Right cardiac atrium (tissue), 5 donors: ENCODE measurements at regions of chr1 and their contacts with region 1.

Region 1: DNA sequence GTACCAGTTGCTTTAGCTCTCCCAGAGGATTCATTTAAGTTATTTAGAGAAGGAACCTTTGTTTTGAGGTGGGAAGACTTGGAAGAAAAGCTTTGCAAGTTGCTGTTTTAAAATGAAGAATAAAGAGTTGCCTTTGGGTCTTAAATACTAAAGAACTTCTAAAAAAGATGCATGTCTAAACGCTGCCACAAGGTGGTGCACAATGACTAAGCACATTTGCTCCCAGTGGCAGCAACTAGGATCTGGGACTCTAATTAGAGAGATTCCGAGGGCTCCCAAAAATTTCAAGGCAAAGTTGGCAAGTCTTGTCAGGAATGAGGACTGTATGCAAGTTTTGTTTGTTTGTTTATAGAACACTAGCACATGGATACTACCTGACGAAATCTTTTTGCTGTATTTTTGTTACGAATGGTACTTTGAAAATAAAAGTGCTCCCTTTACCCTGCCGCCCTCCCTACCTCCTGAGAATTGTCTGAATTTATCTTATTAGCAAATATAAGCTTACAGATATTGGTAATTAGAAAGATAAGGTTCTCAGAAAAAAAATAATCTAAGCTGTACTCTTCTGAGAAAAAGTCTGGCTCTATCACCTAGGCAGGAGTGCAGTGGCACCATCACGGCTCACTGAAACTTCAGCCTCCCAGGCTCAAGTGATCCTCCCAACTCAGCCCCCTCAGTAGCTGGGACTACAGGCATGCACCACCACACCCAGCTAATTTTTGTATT is 121.8 kb downstream of the HFM1 start:
- DNase-seq: peak in 2 of 3 donors; percentile 33 to 64
- ATAC-seq: peak; percentile 66 to 75
- H3K4me3 ChIP-seq: peak overlapping the region; percentile 38
- H3K27ac ChIP-seq: no peak overlapping the region
- H3K4me1 ChIP-seq: no peaks in the 10 kb centered on the region
- H3K27me3 ChIP-seq: no peaks in the 10 kb centered on the region

Region 2: GRCh38 chr1:91397605-91398004 is 114.7 kb after region 1 on chr1:
- intact Hi-C with region 1: loop called in 3 of 4 experiments (anchors 5 to 10 kb)
- DNase-seq: no peak
- ATAC-seq: no peak
- H3K4me3 ChIP-seq: no peak overlapping the region
- H3K27ac ChIP-seq: no peak overlapping the region
- H3K4me1 ChIP-seq: no peaks in the 10 kb centered on the region
- H3K27me3 ChIP-seq: no peaks in the 10 kb centered on the region

Region 3: DNA sequence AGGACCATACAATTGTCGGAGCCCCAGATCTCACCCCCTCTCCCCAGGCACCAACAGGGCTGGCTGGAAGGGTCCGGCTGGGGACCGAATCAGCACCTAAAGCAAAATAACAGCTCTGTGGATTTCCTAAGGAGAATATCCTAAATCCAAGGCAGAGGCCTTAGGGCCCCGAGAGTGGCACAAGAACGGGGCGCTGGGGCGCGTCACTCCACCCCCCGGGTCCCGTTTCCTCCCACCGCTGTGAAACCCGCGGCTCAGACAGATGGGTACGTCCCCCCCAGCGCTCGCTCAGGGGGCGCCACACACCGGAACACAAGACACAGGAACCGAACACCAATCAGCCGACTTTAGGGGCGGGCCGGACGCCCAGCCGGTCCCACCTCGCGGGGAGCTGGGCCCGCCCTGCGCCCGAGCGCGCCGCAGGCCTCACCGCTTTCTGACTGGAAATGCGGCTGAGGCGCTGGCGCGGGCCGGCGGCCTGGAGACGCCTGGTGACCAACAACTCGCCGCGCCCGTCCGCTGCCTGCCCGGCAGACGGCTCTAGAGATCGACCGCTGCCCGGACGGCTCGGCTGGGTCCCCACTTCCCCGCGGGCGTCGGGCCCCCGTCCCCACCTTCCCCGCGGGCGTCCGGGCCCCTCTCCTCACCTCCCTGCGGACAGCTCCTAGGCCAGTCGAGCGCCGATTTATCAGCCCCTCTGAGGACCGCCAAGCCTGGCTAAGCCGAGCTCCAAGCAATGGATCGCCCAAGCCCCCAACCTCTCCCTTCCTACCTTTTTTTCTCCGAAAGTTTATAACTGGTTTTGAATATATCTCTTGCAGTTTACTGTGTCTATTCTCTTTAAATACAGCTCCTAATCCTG is 121.5 kb after region 1 on chr1 and contains the start of gene HFM1:
- intact Hi-C with region 1: loop called in 3 of 4 experiments (anchors 5 to 10 kb)
- DNase-seq: peak; percentile 89 to 95 (median 93)
- ATAC-seq: peak; percentile 99 to 100
- H3K4me3 ChIP-seq: peak within 1 kb of the TSS; percentile 89
- H3K27ac ChIP-seq: peak within 1 kb of the TSS; percentile 89
- H3K4me1 ChIP-seq: no peaks in the 10 kb centered on the region
- H3K27me3 ChIP-seq: no peaks in the 10 kb centered on the region
- total RNA-seq, gene HFM1: 2.2 to 2.9 (median 2.4) TPM

Region 4: DNA sequence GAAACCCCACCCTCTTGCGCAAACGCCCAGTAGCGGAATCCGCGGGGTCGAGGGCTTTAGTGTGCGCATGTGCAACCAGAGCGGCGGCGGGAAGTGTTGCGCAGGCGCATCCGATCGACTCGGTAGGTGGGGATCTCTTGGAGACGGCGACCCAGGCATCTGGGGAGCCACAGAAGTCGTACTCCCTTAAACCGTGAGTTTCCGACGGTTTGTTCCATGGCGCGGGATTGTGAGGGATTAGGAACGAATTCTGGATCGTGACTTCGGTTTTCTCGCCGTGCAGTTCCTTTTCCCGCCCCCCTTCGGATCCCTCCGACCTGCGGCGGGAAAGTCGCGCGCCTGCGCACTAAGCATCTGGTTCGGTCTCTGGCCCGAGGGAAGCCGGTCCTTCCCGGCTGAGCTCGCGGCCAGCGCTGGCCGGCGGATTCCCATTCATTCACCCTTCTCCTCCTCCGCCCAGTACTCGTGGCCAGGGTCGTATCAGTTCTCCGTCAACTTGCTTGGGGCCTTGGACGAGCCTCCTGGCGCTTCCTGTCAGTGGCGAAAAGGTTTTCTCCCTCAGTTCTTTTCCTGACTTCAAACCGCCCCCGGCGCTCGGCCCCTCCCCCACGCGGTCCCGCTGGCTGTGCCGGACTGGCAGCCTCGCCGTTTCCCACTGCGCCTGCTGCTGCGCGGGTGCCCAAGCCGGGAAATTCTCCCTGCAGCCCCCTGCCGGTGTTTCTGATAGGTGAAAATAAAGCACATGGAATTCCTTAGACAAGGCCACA is 218.1 kb after region 1 on chr1 and contains the start of gene CDC7:
- intact Hi-C with region 1: loop called in 3 of 4 experiments (anchors 10 kb)
- DNase-seq: peak; percentile 96 to 98 (median 97)
- ATAC-seq: peak; percentile 97
- H3K4me3 ChIP-seq: peak within 1 kb of the TSS; percentile 55
- H3K27ac ChIP-seq: peak within 1 kb of the TSS; percentile 43
- H3K4me1 ChIP-seq: no peaks in the 10 kb centered on the region
- H3K27me3 ChIP-seq: no peaks in the 10 kb centered on the region
- total RNA-seq, gene CDC7: 1.2 to 2.0 (median 1.7) TPM